K562 (cell line): ENCODE measurements at regions of chr6 and their contacts with region 1.

Region 1: DNA sequence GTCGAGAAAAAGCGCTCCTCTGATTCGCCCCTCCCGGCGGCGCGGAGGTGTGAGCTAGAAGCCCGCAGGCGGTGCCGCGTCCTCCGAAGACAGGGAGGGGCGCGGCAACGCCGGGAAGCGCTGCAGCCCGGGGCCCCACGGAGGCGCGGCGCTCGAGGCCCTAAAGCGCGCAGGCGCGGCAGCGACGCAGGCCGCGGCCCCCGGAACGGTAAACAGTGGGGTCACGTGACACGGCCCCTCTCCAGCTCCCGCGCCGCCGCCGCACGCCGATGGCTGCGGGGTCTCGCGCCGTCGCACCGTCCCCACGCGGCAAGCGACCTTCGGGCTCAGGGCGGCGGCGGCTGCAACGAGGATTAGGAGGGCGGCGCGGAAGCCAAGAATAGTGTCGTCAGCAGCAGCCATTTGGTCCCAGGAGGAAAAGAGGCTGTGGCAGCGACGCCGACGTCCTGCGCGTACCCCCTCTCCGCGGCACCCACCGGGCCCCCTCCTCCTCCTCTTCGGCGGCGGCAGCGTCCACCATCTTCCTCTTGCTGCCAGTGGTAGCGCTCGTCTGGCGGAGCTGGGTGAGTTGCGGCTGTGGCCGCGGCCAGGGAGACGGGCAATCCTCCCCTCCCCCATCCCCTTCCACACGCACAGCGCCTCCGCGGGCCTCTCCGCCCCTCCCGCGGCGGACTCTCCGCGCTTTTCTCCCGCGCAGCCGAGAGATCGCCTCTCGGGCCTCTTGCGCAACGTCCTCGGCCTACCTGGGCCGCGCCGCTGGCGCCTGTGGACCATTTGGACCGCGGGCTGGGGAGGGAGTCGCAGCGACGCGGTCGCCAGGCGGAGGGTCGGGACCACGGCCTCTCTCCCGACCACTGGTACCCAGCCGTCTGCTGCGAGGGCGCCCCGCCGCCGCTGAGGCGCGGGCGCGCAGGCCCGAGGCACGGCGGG is at the start of gene PHF3:
- DNase-seq: peak; percentile 94 to 96 (median 95)
- ATAC-seq: peak; percentile 91
- H3K4me3 ChIP-seq: peak within 1 kb of the TSS; percentile 93
- H3K27ac ChIP-seq: peak within 1 kb of the TSS; percentile 95
- H3K4me1 ChIP-seq: peaks cover 13 to 21% of the 10 kb centered on the region in 2 experiments; a peak in 3 of 5 replicates
- H3K27me3 ChIP-seq: no peaks in the 10 kb centered on the region
- CTCF ChIP-seq: no peak; a peak in 2 of 6 replicates
- EP300 ChIP-seq: no peak; the same call in 1 of the 2 replicates
- POLR2A ChIP-seq: peak; percentile 80
- RAD21 ChIP-seq: no peak
- polyA plus RNA-seq, gene PHF3: 8.1 to 8.6 TPM

Region 2: DNA sequence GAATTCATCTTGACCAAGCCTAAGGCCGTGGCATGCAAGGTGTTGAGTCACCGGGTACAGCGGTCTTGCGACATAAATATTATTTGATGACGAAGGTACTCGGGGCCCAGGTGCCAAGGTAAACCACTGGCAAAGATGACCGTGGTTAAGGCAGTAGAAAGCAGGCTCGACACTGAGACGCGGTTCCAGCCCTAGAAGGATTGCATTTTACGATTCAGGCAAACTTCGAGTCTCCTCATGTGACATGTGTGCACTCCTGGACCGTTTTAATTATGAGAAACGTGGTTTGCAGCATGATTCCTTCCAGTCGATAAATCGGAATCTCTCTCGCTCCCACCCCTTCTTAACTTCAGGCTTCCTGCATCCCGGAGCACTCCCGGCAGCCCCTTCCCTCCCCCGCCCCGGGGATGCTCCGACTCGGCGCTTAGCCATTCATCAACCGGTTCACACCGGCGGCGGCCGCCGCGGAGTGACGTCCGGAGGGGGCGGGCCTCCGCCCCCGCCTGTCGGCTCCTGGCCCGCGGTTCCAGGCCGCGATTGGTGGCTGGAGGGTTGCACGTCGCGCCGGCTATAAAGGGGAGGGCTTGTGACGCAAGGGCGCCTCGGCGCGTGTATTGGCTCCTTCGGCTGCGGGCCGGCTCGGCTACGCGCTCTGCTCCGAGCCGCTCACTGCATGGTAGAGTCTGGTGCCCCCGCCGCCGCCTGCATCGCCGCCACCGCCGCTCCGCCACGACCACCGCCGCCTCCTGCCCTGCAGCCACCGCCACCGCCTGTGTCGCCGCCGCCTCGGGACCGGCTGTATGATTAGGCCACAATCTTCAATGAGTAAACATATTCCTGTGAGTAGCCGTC is 63.7 kb before region 1 on chr6 and contains the starts of genes LOC128125822 and PTP4A1:
- CTCF ChIA-PET with region 1: no interaction called
- POLR2A ChIA-PET with region 1: no interaction called
- in situ Hi-C with region 1: no loop called
- intact Hi-C with region 1: loop called (anchors 2 kb)
- DNase-seq: peak; percentile 92 to 98 (median 94)
- ATAC-seq: peak; percentile 96
- H3K4me3 ChIP-seq: peak within 1 kb of the TSS; percentile 94
- H3K27ac ChIP-seq: peak within 1 kb of the TSS; percentile 97
- H3K4me1 ChIP-seq: peaks cover 7 to 11% of the 10 kb centered on the region in 2 experiments; a peak in 3 of 5 replicates
- H3K27me3 ChIP-seq: no peaks in the 10 kb centered on the region
- CTCF ChIP-seq: no peak
- EP300 ChIP-seq: peak; percentile 50
- POLR2A ChIP-seq: peak; percentile 93
- RAD21 ChIP-seq: no peak
- polyA plus RNA-seq, gene PTP4A1: 3.7 to 13.6 TPM

Region 3: GRCh38 chr6:63615590-63615989 is 20.3 kb before region 1 on chr6:
- CTCF ChIA-PET with region 1: no interaction called
- POLR2A ChIA-PET with region 1: interaction called, 12 read pairs
- in situ Hi-C with region 1: no loop called
- intact Hi-C with region 1: no loop called
- DNase-seq: no peak
- ATAC-seq: no peak
- H3K4me3 ChIP-seq: no peak overlapping the region
- H3K27ac ChIP-seq: no peak overlapping the region
- H3K4me1 ChIP-seq: peaks cover 0 to 3% of the 10 kb centered on the region in 2 experiments; a peak in 2 of 5 replicates
- H3K27me3 ChIP-seq: no peaks in the 10 kb centered on the region
- CTCF ChIP-seq: no peak
- EP300 ChIP-seq: no peak
- POLR2A ChIP-seq: no peak
- RAD21 ChIP-seq: no peak

Region 4: GRCh38 chr6:63685446-63686379 is 49.9 kb after region 1 on chr6:
- CTCF ChIA-PET with region 1: no interaction called
- POLR2A ChIA-PET with region 1: no interaction called
- in situ Hi-C with region 1: no loop called
- intact Hi-C with region 1: loop called (anchors 5 kb)
- DNase-seq: no peak
- ATAC-seq: no peak
- H3K4me3 ChIP-seq: no peak overlapping the region
- H3K27ac ChIP-seq: no peak overlapping the region
- H3K4me1 ChIP-seq: no peaks in the 10 kb centered on the region
- H3K27me3 ChIP-seq: no peaks in the 10 kb centered on the region
- CTCF ChIP-seq: no peak
- EP300 ChIP-seq: no peak
- POLR2A ChIP-seq: no peak
- RAD21 ChIP-seq: no peak